Aorta (tissue), 5 donors: ENCODE measurements at regions of chr16 and their contacts with region 1.

Region 1: GRCh38 chr16:10828851-10829731 is 10.5 kb upstream of the TVP23A start:
- DNase-seq: peak; percentile 97 to 98
- ATAC-seq: peak; percentile 92
- H3K4me3 ChIP-seq: no peak overlapping the region
- H3K27ac ChIP-seq: peak overlapping the region; percentile 92 to 98
- H3K4me1 ChIP-seq: no peaks in the 10 kb centered on the region
- H3K27me3 ChIP-seq: no peaks in the 10 kb centered on the region

Region 2: DNA sequence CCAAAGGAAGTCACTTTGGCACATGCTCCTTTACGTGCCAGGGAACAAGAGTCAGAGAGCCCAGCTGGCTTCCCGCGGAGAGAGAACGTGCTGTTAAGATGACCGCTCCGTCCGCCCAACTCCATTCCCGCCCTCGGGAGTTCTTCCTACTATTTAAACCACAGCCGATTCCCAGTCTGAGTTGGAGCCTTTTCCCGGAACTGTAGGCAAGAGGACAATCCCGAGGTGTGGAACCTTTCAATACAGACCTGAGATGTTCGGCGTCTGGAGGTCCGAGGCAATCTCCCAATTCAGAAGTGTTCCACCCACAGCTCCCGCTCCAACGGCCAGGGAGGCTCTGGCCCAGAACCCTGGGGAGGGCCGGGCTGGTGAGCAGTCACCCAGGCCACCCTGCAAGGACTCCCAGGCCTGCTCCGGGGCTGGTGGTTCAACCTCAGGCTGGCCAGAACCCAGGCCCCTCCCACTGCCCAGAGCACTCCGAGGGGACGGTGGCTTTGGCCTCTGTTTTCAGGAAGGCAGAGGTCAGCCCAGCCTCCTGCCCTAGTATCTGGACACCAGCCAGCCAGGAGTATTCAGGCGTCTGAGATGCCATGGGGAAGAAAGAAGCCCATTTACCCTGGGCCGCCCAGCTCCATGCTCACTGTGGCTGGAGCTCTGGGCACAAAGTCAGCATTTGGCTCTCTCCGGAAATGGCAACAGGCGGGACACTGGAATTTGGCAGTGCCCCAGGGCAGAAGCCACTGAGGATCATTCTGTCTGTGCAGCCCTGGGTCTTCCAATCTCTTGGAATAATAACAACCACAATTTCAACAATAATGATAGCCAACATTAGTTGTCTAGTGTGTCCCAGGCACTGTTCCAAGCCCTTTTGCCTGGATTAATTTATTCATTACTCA is 270.1 kb before region 1 on chr16:
- intact Hi-C with region 1: loop called in 1 of 2 experiments (anchors 5 kb)
- DNase-seq: peak; percentile 93
- ATAC-seq: peak; percentile 88
- H3K4me3 ChIP-seq: peak overlapping the region in 1 of 2 donors; percentile 12
- H3K27ac ChIP-seq: peak overlapping the region; percentile 83 to 98
- H3K4me1 ChIP-seq: peaks cover 0 to 4% of the 10 kb centered on the region in 2 donors
- H3K27me3 ChIP-seq: no peaks in the 10 kb centered on the region

Region 3: DNA sequence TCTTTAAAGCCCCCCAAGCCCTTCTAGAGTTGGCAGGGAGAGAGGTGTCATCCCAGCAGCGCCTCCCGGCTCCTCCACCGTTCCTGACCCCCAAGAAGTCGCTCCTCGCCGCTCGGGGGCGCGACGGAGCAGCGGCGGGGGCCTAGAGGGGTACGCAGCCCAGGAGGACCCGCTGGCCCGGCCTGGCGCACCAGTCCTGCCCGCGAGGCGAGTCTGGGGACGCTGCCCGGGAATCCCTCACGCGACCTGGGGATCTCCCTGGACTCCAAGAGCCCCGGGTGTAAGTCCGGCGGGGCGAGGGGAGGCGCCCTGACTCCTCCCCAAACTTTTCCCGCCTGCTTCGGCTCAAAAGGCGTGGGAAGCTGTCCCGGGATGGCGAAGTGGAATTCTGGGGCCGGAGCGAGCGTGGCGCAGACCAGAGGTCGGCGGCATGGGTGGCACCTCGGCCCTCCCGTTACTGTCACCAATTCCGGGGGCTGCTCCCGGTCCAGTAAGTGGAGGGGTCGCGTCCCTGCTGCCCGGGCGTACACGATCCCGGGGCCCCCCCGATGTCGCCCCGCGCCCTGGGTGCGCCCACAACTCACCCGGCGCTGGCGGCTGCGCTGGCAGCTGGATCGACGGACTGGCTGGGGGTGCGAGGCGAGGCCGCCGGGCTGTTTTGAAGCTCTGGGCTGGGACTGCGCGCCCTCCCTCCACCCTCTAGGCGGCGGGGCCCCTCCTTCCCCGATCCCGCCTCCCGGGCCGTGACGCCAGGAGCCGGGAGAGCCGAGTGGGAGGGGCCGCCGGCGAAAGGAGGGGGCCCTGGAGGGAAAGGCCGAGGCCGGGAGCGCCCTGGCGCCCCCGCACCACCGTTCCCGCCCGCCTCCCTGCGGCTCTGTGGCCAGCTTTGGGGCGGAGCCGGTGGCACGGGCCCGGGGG is 248.9 kb before region 1 on chr16 and contains the start of gene EMP2:
- intact Hi-C with region 1: loop called in 1 of 2 experiments (anchors 1 kb)
- DNase-seq: peak; percentile 88 to 96
- ATAC-seq: peak; percentile 95
- H3K4me3 ChIP-seq: peak within 1 kb of the TSS; percentile 79 to 90
- H3K27ac ChIP-seq: peak within 1 kb of the TSS; percentile 58 to 88
- H3K4me1 ChIP-seq: no peaks in the 10 kb centered on the region
- H3K27me3 ChIP-seq: no peaks in the 10 kb centered on the region
- total RNA-seq, gene EMP2: 133 to 143 TPM

Region 4: GRCh38 chr16:10743610-10744393 is 85.3 kb before region 1 on chr16 and contains the start of gene NUBP1:
- intact Hi-C with region 1: loop called (anchors 2 kb)
- DNase-seq: peak; percentile 99 to 100
- ATAC-seq: peak; percentile 98
- H3K4me3 ChIP-seq: peak within 1 kb of the TSS; percentile 29 to 35
- H3K27ac ChIP-seq: peak within 1 kb of the TSS; percentile 71 to 100
- H3K4me1 ChIP-seq: peaks cover 0 to 2% of the 10 kb centered on the region in 2 donors
- H3K27me3 ChIP-seq: no peaks in the 10 kb centered on the region
- total RNA-seq, gene NUBP1: 31.3 TPM

Region 5: GRCh38 chr16:10754941-10755340 is 74.2 kb before region 1 on chr16:
- intact Hi-C with region 1: loop called (anchors 2 to 5 kb)
- DNase-seq: peak in 1 of 2 donors; percentile 26
- ATAC-seq: no peak
- H3K4me3 ChIP-seq: no peak overlapping the region
- H3K27ac ChIP-seq: no peak overlapping the region
- H3K4me1 ChIP-seq: no peaks in the 10 kb centered on the region
- H3K27me3 ChIP-seq: no peaks in the 10 kb centered on the region

Region 6: DNA sequence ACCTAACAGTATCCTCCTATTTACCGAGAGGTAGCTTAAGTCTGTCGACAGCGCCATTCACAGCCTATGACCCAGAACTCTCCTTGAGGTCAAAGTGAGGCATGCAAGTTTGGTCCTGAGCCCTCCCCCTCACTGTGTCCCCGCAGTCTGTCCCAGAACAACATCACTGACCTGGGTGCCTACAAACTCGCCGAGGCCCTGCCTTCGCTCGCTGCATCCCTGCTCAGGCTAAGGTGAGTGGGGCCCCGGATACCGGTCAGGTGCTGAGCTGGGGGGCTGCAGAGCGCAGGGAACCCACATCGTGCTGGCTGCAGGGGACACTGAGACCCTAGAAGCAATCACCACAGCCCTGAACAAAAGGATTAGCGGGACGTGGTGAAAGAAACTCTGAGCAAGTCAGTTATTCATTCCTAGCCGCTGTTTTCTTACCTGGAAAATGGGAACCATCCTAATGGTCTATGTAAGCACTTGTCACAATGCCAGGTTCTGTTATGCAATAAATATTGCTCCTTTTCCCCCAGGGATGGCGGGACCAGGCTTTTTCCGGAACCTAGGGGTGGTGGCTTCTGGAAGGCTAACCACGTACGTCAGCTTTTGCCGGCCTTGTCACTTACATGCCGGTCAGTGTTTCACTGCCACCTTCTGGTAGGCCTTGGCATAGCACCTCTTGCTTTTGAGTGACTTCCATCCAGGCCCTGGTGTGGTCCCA is 89.4 kb after region 1 on chr16:
- intact Hi-C with region 1: loop called (anchors 2 to 5 kb)
- DNase-seq: peak; percentile 96 to 97
- ATAC-seq: peak; percentile 94
- H3K4me3 ChIP-seq: no peak overlapping the region
- H3K27ac ChIP-seq: no peak overlapping the region
- H3K4me1 ChIP-seq: no peaks in the 10 kb centered on the region
- H3K27me3 ChIP-seq: no peaks in the 10 kb centered on the region